MCF 10A (cell line): ENCODE measurements at regions of chr7 and their contacts with region 1.

Region 1: GRCh38 chr7:39623018-39623731 is at the start of gene RALA:
- DNase-seq: peak; percentile 90
- H3K4me3 Mint-ChIP-seq: peak within 1 kb of the TSS; percentile 84
- H3K27ac Mint-ChIP-seq: peak within 1 kb of the TSS; percentile 90
- H3K4me1 Mint-ChIP-seq: peaks cover 37% of the 10 kb centered on the region
- H3K27me3 Mint-ChIP-seq: no peaks in the 10 kb centered on the region
- CTCF ChIP-seq: no peak
- total RNA-seq, gene RALA: 34.1 and 42.7 TPM in 2 replicates

Region 2: DNA sequence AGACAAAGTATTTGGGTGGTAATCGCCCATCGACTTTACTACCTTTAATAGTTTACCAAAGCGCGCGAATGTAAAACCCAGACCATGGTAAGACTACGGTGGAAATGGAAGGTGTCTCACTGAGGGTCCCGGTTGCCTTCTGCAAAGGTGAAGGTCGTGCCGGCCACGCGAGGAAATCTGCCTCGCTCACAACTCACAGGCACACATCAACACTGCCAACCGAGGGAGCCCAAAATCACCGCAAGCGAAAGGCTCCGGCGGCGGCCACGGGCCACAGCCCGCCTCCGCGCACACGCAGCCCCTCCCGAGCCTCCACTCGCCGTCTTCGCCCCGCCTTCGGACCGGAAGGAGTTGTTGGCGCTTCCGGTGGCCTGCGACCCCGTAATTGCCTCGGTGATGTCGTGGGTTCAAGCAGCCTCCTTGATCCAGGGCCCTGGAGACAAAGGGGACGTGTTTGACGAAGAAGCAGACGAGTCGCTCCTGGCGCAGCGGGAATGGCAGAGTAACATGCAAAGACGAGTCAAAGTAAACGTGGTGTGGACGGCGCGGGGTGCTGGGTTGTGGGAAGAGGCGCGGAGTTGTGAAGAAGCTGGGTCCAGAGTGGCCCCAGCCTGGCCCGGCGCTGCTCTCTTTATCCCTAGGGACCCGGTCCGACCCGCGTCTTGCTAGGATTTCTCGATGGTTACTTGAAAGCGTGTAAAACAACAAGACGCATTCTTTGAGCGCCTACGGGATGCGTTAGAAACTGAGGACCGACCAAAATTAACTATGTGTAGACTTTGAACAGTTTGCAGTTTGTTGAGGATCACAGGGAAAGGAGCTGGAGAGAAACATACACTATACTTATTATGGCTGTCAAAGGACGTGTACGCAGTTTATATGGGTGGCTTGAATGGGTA is 56.9 kb before region 1 on chr7 and contains the start of gene YAE1:
- CTCF ChIA-PET with region 1: no interaction called
- POLR2A ChIA-PET with region 1: interaction called, 18 read pairs
- intact Hi-C with region 1: no loop called
- DNase-seq: peak; percentile 77
- H3K4me3 Mint-ChIP-seq: peak within 1 kb of the TSS; percentile 82
- H3K27ac Mint-ChIP-seq: peak within 1 kb of the TSS; percentile 84
- H3K4me1 Mint-ChIP-seq: peaks cover 4% of the 10 kb centered on the region
- H3K27me3 Mint-ChIP-seq: no peaks in the 10 kb centered on the region
- CTCF ChIP-seq: no peak
- total RNA-seq, gene YAE1: 34.7 and 37.6 TPM in 2 replicates

Region 3: DNA sequence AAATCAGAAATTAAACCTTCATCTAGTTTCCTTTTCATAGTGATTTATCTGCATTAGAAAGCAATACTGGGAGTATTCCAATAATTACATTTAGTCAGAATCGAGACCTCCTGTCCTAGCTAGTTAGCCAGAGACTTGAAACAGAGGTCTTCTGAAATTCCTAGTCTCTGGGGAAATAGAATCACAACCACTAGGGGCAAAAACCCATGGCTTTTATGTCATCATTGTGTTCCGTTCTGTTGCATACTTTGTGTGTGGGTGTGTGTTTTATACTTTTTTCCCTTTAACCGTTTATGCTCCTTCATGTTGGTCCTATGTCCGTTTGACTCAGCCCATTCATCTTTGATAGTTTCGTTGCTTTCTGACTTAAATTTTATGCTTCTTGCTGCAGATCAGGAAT is 80.0 kb after region 1 on chr7:
- CTCF ChIA-PET with region 1: interaction called, 4 read pairs
- POLR2A ChIA-PET with region 1: interaction called, 3 read pairs
- intact Hi-C with region 1: loop called (anchors 5 kb)
- DNase-seq: no peak
- H3K4me3 Mint-ChIP-seq: no peak overlapping the region
- H3K27ac Mint-ChIP-seq: no peak overlapping the region
- H3K4me1 Mint-ChIP-seq: peaks cover 16% of the 10 kb centered on the region
- H3K27me3 Mint-ChIP-seq: no peaks in the 10 kb centered on the region
- CTCF ChIP-seq: no peak

Region 4: DNA sequence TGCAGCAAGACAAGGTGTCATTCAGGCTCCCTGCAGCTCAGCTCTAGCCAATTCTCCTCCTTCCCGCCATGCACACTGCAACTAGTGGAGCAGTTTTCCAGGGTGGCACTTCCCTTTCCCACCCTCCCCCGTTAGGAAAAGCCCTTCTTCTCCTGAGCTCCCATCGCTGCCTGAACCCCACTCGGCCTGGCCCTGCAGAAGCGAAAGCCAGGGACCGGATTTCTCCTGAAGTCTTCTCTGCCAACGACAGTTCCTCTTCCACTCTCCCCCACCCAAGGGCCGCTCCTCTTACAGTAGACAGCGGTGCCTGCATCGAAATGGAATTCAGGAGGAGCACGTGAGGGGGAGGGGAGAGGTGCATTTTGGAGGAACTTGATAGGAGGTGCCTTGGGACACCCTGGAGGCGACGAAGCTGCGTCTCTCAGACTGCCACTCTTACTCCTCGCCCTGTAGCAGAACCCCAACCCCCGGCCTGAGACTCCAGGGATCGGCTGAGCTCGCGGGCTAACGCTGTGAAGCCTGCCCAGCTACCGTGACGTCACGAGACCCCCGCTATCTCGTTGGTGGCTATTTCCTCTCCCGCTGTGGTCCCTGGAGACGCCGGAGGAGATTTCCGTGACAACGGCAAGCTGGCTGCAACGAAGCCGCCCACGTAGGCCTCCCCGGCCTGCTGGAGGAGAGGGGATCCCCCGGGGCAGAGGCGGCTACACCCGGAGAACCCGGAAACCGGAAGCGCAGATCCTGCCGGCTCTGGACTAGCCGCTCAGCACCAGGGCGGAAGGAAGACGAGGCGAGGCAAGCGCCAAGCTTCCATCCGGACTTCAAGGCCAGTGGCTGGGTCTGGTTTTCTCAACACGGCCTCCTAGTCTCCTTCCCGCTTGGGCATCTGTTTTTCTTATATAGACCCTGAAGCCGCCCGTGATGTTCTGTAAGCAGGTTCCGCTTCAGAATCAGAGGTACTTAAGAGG is 109.9 kb after region 1 on chr7:
- CTCF ChIA-PET with region 1: interaction called, 5 read pairs
- POLR2A ChIA-PET with region 1: interaction called, 31 read pairs
- intact Hi-C with region 1: loop called (anchors 5 kb)
- DNase-seq: peak; percentile 93
- H3K4me3 Mint-ChIP-seq: peak overlapping the region; percentile 88
- H3K27ac Mint-ChIP-seq: peak overlapping the region; percentile 96
- H3K4me1 Mint-ChIP-seq: peaks cover 18% of the 10 kb centered on the region
- H3K27me3 Mint-ChIP-seq: no peaks in the 10 kb centered on the region
- CTCF ChIP-seq: no peak

Region 5: DNA sequence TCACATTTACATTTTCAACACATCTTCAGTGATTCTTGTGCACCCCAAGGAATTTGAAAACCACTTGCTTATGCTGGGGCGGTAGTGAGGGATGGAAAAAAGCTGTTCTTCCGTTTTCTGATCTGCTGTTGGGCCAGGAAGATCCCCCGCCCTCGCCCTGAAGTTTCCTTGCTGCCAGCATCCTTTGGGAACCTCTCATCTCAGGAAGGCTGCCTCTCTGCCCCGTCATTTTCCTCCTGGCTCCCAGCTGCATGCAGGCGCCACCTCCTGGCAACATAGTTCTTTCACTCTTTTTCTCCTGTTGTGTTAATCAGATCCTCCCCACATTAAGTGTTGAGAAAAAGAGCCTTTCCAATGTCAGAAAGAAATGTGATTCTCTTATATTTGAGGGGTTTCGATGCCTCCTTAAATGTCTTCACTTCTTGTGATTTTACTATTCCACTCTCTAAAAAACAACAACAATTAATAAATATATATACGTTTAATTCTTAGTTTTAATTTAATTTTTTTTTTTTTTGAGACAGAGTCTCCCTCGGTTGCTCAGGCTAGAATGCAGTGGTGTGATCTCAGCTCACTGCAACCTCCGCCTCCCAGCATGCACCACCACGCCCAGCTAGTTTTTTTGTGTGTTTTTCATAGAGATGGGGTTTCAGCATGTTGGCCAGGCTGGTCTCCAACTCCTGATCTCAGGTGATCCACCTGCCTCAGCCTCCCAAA is 123.1 kb after region 1 on chr7:
- CTCF ChIA-PET with region 1: interaction called, 10 read pairs
- POLR2A ChIA-PET with region 1: interaction called, 17 read pairs
- intact Hi-C with region 1: loop called (anchors 1 kb)
- DNase-seq: peak; percentile 79
- H3K4me3 Mint-ChIP-seq: no peak overlapping the region
- H3K27ac Mint-ChIP-seq: peak overlapping the region; percentile 23
- H3K4me1 Mint-ChIP-seq: peaks cover 12% of the 10 kb centered on the region
- H3K27me3 Mint-ChIP-seq: no peaks in the 10 kb centered on the region
- CTCF ChIP-seq: peak; percentile 49